ENCODE measurements at regions of chr21 and their contacts with region 1.

Region 1: GRCh38 chr21:25626757-25627156 is 12.3 kb upstream of the JAM2 start:
- DNase-seq: no peak
- H3K4me3 ChIP-seq: no peak overlapping the region
- H3K27ac ChIP-seq: no peak overlapping the region
- H3K4me1 ChIP-seq: no peaks in the 10 kb centered on the region
- H3K27me3 ChIP-seq: no peaks in the 10 kb centered on the region
- CTCF ChIP-seq: no peak

Region 2: GRCh38 chr21:25670726-25671125 is 44.0 kb after region 1 on chr21:
- CTCF ChIA-PET with region 1: no interaction called
- POLR2A ChIA-PET with region 1: interaction called, 10 read pairs
- intact Hi-C with region 1: no loop called
- DNase-seq: no peak
- H3K4me3 ChIP-seq: no peak overlapping the region
- H3K27ac ChIP-seq: no peak overlapping the region
- H3K4me1 ChIP-seq: no peaks in the 10 kb centered on the region
- H3K27me3 ChIP-seq: no peaks in the 10 kb centered on the region
- CTCF ChIP-seq: no peak

Measured in PC-9 (cell line).